Heart right ventricle (tissue), 16 donors: ENCODE measurements at regions of chr15 and their contacts with region 1.

Region 1: GRCh38 chr15:90994417-90995311 is at the start of gene PRC1:
- DNase-seq: peak; percentile 98 to 99
- ATAC-seq: peak; percentile 100
- H3K4me3 ChIP-seq: peak within 1 kb of the TSS; percentile 63 to 96 (median 83)
- H3K27ac ChIP-seq: peak within 1 kb of the TSS; percentile 4 to 93 (median 81)
- H3K4me1 ChIP-seq: peaks cover 0 to 18% (median 5%) of the 10 kb centered on the region in 9 donors
- H3K27me3 ChIP-seq: no peaks in the 10 kb centered on the region
- CTCF ChIP-seq: no peak
- total RNA-seq, gene PRC1: 2.1 to 16.2 (median 4.4) TPM

Region 2: DNA sequence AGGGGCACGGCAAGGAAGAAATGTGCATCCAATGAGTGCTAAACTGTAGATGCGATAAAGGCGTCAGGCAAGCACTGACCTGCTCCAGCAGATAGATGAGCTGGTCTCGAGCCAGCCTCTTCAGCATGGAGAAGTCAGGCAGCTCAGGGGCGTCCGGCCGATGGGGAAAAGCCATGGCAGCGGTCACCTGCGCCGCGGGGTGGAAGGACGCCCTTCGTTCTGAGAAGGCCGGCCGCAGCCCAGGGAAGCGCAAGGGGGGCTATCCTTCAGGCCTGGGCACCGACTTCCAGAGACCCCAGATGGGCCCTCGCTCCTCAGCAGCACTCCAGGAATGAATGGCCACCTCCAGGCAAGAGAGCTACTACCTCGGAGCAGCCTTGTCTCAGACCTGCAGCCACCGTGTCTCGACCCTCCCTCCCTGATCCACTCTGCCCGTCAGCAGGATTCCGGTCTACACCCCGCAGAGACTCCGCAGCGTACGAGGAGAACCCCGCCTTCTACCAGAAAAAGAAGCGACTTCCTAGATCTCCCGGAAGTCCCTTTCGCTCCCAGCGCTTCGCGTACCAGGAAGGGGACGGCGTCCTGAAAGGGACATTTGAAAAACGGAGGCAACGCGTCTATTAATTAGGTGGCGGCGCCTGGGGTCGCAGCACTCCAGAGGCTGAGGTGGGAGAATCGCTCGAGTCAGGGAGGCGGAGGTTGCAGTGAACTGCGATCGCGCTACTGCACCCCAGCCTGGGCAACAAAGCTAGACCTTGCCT is 27.6 kb after region 1 on chr15 and contains the start of gene VPS33B:
- intact Hi-C with region 1: loop called in 2 of 10 experiments (anchors 2 kb)
- DNase-seq: peak; percentile 76 to 90
- ATAC-seq: peak; percentile 90 to 97 (median 94)
- H3K4me3 ChIP-seq: peak within 1 kb of the TSS; percentile 53 to 96 (median 90)
- H3K27ac ChIP-seq: peak within 1 kb of the TSS in 9 of 10 donors; percentile 46 to 90 (median 78)
- H3K4me1 ChIP-seq: peaks cover 0 to 30% (median 23%) of the 10 kb centered on the region in 9 donors
- H3K27me3 ChIP-seq: no peaks in the 10 kb centered on the region
- CTCF ChIP-seq: peak in 2 of 9 donors; percentile 2 to 15
- total RNA-seq, gene VPS33B: 3.7 to 10.4 (median 5.5) TPM